OCI-LY7 (cell line): ENCODE measurements at regions of chr1 and their contacts with region 1.

Region 1: GRCh38 chr1:114511032-114511785 is at the start of gene TRIM33:
- DNase-seq: peak; percentile 96
- H3K4me3 ChIP-seq: peak within 1 kb of the TSS; percentile 93
- H3K27ac ChIP-seq: peak within 1 kb of the TSS; percentile 92
- H3K4me1 ChIP-seq: peaks cover 37% of the 10 kb centered on the region
- CTCF ChIP-seq: no peak
- total RNA-seq, gene TRIM33: 34.0 and 44.7 TPM in 2 replicates

Region 2: DNA sequence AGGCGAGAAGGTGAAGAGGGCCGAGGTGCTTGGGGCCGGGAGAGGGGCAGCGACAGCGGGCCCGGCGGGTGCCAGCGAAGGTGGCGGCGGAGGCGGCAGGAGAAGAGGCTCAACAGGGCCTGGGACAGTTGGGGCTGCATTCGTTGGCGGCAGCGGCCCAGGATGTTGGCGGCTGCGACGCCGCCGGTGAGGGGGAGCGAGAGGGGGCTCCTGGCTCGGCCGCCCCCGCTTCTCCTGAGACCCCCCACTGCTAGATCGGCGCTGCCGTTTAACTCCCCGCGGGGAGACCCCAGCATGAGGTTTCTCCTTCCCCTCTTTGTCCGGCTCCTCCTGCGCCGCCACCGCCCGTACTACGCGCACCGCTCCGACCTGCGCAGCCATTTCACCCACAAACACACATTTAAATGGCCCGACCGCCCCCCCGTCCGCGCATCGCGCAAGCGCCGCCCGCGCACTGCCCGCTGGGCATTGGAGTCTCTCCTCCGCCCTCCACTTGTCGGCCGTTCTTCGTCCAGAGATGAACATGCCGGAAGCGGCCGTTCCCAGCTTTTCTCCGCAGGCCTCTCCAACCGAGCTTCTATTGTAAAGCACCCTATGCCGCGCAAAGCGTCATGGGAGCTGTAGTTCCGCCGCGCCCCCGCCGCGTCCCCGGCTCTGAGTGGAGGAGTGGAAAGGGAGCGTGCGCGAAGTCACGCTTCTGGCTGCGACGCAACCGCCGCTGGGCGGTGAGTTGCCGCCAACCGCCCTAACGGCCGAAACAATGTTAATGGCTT is 699.1 kb before region 1 on chr1 and contains the start of gene RSBN1:
- CTCF ChIA-PET with region 1: no interaction called
- POLR2A ChIA-PET with region 1: no interaction called
- intact Hi-C with region 1: loop called (anchors 2 kb)
- DNase-seq: peak; percentile 99
- H3K4me3 ChIP-seq: peak within 1 kb of the TSS; percentile 84
- H3K27ac ChIP-seq: peak within 1 kb of the TSS; percentile 93
- H3K4me1 ChIP-seq: peaks cover 30% of the 10 kb centered on the region
- CTCF ChIP-seq: no peak
- total RNA-seq, gene RSBN1: 10.8 and 12.5 TPM in 2 replicates

Region 3: GRCh38 chr1:114428083-114428749 is 83.0 kb before region 1 on chr1:
- CTCF ChIA-PET with region 1: no interaction called
- POLR2A ChIA-PET with region 1: interaction called, 4 read pairs
- intact Hi-C with region 1: loop called (anchors 5 kb)
- DNase-seq: peak; percentile 19
- H3K4me3 ChIP-seq: no peak overlapping the region
- H3K27ac ChIP-seq: no peak overlapping the region
- H3K4me1 ChIP-seq: peaks cover 11% of the 10 kb centered on the region
- CTCF ChIP-seq: peak; percentile 82

Region 4: GRCh38 chr1:114482204-114482980 is 28.8 kb before region 1 on chr1:
- CTCF ChIA-PET with region 1: no interaction called
- POLR2A ChIA-PET with region 1: interaction called, 4 read pairs
- intact Hi-C with region 1: loop called (anchors 2 kb)
- DNase-seq: peak; percentile 80
- H3K4me3 ChIP-seq: peak overlapping the region; percentile 34
- H3K27ac ChIP-seq: peak overlapping the region; percentile 72
- H3K4me1 ChIP-seq: peaks cover 19% of the 10 kb centered on the region
- CTCF ChIP-seq: no peak

Region 5: GRCh38 chr1:114524935-114525334 is 13.7 kb after region 1 on chr1:
- CTCF ChIA-PET with region 1: no interaction called
- POLR2A ChIA-PET with region 1: interaction called, 13 read pairs
- intact Hi-C with region 1: no loop called
- DNase-seq: peak; percentile 19
- H3K4me3 ChIP-seq: no peak overlapping the region
- H3K27ac ChIP-seq: no peak overlapping the region
- H3K4me1 ChIP-seq: no peaks in the 10 kb centered on the region
- CTCF ChIP-seq: no peak

Region 6: GRCh38 chr1:114581335-114582287 is 70.4 kb after region 1 on chr1 and contains the start of gene BCAS2:
- CTCF ChIA-PET with region 1: no interaction called
- POLR2A ChIA-PET with region 1: interaction called, 5 read pairs
- intact Hi-C with region 1: loop called (anchors 5 kb)
- DNase-seq: peak; percentile 98
- H3K4me3 ChIP-seq: peak within 1 kb of the TSS; percentile 94
- H3K27ac ChIP-seq: peak within 1 kb of the TSS; percentile 47
- H3K4me1 ChIP-seq: peaks cover 15% of the 10 kb centered on the region
- CTCF ChIP-seq: no peak
- total RNA-seq, gene BCAS2: 40.8 and 41.8 TPM in 2 replicates

Region 7: DNA sequence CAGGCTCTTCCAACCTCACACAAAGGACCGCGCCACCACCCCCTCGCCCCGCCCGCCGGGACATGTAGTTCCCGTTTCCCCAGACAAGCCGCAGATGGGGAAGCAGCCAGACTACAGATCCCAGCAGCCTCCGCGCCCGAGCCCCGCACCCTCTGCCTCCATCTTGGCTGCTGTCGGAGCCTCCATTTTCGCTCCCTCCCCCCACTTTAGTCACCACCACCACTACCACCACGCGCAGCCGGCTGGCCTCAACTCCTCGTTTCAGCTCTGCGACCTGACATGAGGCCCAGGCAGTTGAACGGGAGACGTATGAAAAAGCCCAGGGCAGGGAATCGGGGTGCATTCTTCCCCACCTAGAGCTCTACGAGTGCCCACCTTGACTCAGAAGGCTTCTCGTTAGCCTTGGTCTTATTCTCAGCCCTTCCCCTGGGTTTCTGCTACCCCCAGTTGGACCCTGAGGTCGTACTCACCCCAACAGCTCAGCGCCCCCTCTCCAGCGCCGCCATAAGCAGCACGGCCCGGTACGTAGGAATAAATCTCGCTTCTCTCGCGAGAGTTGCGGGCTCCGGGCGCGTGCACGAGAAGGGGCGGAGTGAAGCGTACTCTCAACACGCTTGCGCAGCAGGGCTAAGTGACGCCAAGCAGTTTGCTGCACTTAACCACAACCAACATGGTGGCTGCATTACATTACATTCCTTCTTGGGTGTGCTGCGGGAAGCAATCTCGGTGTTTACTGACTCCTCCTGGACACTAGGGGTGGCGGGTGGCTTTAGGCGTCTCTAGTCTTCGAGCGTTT is 246.4 kb after region 1 on chr1 and contains the start of gene CSDE1:
- CTCF ChIA-PET with region 1: no interaction called
- POLR2A ChIA-PET with region 1: interaction called, 3 read pairs
- intact Hi-C with region 1: loop called (anchors 1 kb)
- DNase-seq: peak; percentile 99
- H3K4me3 ChIP-seq: peak within 1 kb of the TSS; percentile 90
- H3K27ac ChIP-seq: peak within 1 kb of the TSS; percentile 84
- H3K4me1 ChIP-seq: peaks cover 40% of the 10 kb centered on the region
- CTCF ChIP-seq: peak; percentile 69
- total RNA-seq, gene CSDE1: 177 and 223 TPM in 2 replicates